ENCODE measurements at regions of chr1 and their contacts with region 1.

Region 1: GRCh38 chr1:171403371-171403770 is 82.0 kb upstream of the PRRC2C start:
- DNase-seq: peak; percentile 81
- H3K4me3 Mint-ChIP-seq: no peak overlapping the region
- H3K27ac Mint-ChIP-seq: peak overlapping the region; percentile 86
- H3K4me1 Mint-ChIP-seq: peaks cover 18% of the 10 kb centered on the region
- H3K27me3 Mint-ChIP-seq: no peaks in the 10 kb centered on the region
- CTCF ChIP-seq: no peak

Region 2: GRCh38 chr1:171188388-171189266 is 214.7 kb before region 1 on chr1:
- CTCF ChIA-PET with region 1: no interaction called
- POLR2A ChIA-PET with region 1: no interaction called
- intact Hi-C with region 1: no loop called
- DNase-seq: peak; percentile 87
- H3K4me3 Mint-ChIP-seq: no peak overlapping the region
- H3K27ac Mint-ChIP-seq: no peak overlapping the region
- H3K4me1 Mint-ChIP-seq: no peaks in the 10 kb centered on the region
- H3K27me3 Mint-ChIP-seq: no peaks in the 10 kb centered on the region
- CTCF ChIP-seq: peak; percentile 94

Region 3: DNA sequence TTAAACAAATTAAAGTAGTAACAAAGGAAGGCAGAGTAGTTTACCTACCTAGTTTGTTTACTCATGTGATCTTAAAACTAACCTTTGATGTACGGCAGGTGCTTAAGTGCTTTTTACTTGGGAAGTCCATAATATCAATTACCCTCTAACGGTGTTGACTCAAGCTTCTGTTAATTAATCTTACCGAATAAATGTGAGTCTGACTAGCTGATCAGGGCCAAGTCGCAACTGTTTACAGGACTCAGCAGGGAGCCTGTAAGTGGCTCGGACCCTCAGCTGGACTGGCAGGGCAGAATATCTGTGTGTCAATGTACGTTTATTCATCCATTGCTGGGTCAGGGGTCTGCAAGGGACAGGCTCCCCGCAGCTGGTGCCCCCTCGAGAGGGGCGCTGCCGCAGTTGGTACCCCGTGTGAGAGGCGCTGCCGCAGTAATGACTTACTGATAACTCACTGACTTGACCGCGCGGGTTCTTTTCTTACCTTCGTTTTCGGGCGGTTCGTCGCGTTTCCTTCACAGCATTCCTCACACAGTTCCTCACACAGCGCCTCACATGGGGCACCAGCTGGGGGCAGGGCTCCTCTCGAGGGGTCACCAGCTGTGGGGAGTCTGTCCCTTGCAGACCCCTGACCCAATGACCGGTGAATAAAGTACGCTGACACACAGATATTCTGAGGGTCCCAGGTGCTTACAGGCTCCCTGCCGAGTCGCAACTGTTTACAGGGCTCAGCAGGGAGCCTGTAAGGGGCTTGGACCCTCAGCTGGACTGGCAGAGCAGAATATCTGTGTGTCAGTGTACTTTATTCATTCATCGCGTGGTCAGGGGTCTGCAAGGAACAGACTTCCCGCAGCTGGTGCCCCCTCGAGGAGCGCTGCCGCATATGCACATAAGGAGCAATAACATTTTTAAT is 152.1 kb before region 1 on chr1:
- CTCF ChIA-PET with region 1: interaction called, 31 read pairs
- POLR2A ChIA-PET with region 1: no interaction called
- intact Hi-C with region 1: loop called (anchors 10 kb)
- DNase-seq: peak; percentile 68
- H3K4me3 Mint-ChIP-seq: peak overlapping the region; percentile 82
- H3K27ac Mint-ChIP-seq: peak overlapping the region; percentile 64
- H3K4me1 Mint-ChIP-seq: peaks cover 13% of the 10 kb centered on the region
- H3K27me3 Mint-ChIP-seq: no peaks in the 10 kb centered on the region
- CTCF ChIP-seq: peak; percentile 56

Region 4: DNA sequence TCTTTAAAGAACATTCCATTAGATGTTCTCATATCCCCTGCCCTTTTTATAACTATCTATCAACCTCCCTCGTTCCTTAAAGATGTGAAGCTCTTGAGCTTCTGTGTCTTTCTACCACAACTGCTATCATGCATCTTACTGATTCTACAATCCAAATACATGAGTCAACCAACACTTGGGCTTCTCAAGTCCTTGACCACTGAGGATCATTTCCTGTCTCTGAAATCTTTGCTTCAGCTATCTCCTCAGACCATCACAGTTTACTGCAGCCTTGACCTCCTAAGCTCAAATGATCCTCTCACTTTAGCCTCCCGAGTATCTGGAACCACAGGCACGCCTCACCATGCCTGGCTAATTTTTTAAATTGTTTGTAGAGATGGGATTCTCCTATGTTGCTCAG is 14.2 kb before region 1 on chr1:
- CTCF ChIA-PET with region 1: interaction called, 14 read pairs
- POLR2A ChIA-PET with region 1: interaction called, 4 read pairs
- intact Hi-C with region 1: no loop called
- DNase-seq: no peak
- H3K4me3 Mint-ChIP-seq: no peak overlapping the region
- H3K27ac Mint-ChIP-seq: no peak overlapping the region
- H3K4me1 Mint-ChIP-seq: no peaks in the 10 kb centered on the region
- H3K27me3 Mint-ChIP-seq: no peaks in the 10 kb centered on the region
- CTCF ChIP-seq: no peak

Region 5: GRCh38 chr1:171418616-171419015 is 15.2 kb after region 1 on chr1:
- CTCF ChIA-PET with region 1: interaction called, 11 read pairs
- POLR2A ChIA-PET with region 1: interaction called, 6 read pairs
- intact Hi-C with region 1: no loop called
- DNase-seq: no peak
- H3K4me3 Mint-ChIP-seq: no peak overlapping the region
- H3K27ac Mint-ChIP-seq: no peak overlapping the region
- H3K4me1 Mint-ChIP-seq: peaks cover 17% of the 10 kb centered on the region
- H3K27me3 Mint-ChIP-seq: no peaks in the 10 kb centered on the region
- CTCF ChIP-seq: no peak

Region 6: DNA sequence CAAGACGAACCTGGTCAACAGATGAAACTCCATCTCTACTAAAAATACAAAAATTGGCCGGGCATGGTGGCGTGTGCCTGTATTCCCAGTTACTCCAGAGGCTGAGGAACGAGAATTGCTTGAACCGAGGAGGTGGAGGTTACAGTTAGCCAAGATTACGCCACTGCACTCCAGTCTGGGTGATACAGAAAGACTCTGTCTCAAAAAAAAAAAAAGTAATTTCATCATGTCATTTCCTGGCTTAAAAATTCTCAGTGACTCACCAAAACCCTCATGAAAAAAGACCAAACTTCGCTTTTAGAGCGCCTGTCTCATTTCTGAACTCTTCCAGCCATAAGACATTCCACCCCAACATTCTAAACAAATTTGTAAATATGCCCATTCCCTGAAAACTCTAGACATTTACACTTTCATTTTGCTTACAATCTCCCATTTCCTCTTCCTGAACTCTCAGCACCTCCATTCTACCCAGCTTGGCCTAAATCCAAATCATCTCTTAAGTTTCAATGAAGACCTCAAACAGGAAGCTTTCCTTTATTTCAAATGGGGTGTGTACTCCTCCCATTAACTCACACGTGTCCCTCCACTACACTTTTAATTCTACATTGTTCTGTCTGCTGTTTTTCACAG is 31.5 kb after region 1 on chr1:
- CTCF ChIA-PET with region 1: interaction called, 3 read pairs
- POLR2A ChIA-PET with region 1: interaction called, 3 read pairs
- intact Hi-C with region 1: loop called (anchors 2 kb)
- DNase-seq: peak; percentile 96
- H3K4me3 Mint-ChIP-seq: peak overlapping the region; percentile 58
- H3K27ac Mint-ChIP-seq: peak overlapping the region; percentile 78
- H3K4me1 Mint-ChIP-seq: peaks cover 31% of the 10 kb centered on the region
- H3K27me3 Mint-ChIP-seq: no peaks in the 10 kb centered on the region
- CTCF ChIP-seq: no peak